Activated CD4-positive, alpha-beta memory T cell treated with anti-CD3 and anti-CD28 coated beads for 36 hours (primary cell): ENCODE measurements at regions of chr19 and their contacts with region 1.

Region 1: DNA sequence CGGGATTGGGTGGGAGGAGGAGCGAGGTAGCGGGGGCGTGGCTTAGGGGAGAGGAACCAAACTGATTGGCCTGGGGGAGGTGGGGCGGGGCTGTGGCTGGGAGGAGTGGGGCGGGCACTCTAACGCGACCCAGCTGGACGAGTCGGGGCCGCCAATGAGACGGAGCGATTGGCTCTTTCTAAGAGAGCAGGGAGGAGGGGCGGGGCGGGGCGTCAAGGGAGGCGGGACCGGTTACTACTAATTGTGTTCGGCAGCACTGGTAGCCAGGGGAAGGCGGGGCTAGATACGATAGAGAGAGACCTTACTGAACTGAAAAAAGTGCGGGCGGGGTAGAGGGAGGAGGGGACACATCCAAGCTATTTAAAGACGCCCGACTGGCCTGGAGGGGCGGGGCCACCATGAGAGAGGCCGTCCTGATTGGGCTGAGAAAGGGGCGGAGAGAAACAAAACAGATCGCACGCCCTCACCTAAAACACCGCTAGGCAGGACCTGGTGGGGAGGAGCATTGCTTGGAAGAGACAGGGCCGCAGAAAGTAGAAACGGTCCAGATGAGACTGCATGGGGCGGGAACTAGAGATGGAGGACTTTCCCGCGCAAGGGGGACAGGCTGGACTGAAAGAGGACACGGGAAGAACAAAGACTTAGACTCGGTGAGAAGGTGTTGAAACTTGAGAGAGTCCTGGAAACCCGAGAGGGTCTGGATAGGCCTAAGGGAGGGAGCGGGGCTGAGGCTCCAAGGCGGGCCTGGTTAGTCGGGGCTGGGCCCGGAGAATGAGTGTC is at the start of gene KCNC3:
- DNase-seq: peak; percentile 100
- H3K4me3 Mint-ChIP-seq: peak within 1 kb of the TSS; percentile 82
- H3K27ac Mint-ChIP-seq: peak within 1 kb of the TSS; percentile 88
- H3K4me1 Mint-ChIP-seq: peaks cover 67% of the 10 kb centered on the region
- H3K27me3 Mint-ChIP-seq: peaks cover 49% of the 10 kb centered on the region
- total RNA-seq, gene KCNC3: 5.4 to 6.2 TPM

Region 2: DNA sequence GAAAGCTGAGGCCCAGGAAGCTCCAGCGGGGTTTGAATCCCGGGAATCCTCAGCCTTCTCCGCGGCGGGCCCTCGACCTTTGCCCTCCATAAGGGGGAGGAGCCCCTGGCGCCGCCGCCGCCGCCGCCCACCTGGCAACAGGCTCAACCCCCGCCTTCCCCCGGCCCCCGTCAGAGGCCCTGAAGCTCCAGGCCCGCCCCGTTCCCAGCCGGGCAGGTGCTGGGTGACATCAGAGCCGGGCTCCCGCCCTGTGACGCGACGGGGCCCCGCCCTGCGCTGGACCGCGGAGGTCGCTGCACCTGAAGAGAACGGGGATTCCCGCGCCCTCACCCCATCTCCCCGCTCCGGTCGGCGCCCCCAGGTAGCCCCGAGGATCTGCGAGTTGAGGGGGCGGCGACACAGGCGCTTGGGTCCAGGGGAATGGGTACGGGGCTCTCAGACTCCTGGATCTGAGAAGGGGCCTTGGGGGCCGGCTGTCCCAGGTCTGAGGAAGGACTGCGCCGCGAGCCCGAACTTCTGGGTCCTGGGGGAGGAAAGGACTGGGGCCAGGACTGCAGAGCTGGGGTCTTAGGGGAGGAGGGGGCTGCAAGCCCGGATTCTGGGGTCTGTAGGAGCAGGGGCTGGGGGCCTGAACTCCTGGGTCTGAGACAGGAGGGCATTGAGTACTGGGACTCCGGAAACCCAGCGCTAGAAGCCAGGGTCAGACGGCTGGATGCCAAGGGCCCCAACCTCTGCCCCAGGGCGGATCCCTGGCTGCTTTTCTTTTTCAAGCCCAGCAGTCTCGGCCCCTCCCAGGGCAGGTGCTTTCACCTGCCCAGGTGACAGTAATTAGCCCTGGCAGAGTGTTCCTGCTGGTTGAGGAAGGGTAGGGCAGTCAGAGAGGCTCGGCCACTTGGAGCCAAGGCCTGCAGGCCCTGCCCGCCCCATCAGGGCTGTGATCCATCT is 123.9 kb before region 1 on chr19:
- CTCF ChIA-PET with region 1: no interaction called
- POLR2A ChIA-PET with region 1: no interaction called
- intact Hi-C with region 1: no loop called
- DNase-seq: no peak
- H3K4me3 Mint-ChIP-seq: no peak overlapping the region
- H3K27ac Mint-ChIP-seq: no peak overlapping the region
- H3K4me1 Mint-ChIP-seq: peaks cover 2% of the 10 kb centered on the region
- H3K27me3 Mint-ChIP-seq: peaks cover 37% of the 10 kb centered on the region

Region 3: DNA sequence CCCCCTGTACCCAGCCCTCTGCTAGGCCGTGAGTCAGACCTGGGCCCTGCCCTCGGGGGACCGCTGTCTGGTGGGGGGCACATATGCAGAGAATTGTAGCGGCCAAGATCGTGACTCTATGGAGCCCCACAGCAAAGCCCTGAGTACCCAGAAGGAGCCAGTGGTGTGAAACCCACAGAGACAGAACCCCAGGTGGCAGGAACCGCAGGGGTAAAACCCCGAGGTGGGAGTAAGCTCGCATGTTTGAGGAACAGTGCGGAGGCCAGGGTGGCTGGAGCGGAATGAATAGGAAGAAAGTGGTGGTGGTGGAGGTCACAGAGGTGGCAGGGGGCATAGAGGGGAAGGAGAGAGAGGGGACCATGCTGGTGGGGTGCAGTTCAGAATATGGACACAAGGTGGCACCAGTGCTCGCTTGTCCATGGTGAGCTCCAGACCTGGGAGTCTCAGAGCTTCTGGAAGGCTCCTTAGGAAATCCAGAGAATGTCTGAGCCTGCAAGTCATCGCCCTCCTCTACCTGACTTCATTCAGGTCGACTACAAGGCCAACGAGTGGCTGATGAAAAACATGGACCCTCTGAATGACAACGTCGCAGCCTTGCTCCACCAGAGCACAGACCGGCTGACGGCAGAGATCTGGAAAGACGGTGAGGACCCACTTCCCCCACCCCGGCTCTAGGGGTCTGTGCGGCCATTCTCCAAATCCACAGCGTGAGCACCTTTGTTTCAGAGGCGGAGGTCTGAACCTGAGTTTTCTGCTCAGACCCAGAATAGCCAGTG is 77.0 kb before region 1 on chr19:
- CTCF ChIA-PET with region 1: interaction called, 6 read pairs
- POLR2A ChIA-PET with region 1: no interaction called
- intact Hi-C with region 1: loop called (anchors 5 kb)
- DNase-seq: peak; percentile 57
- H3K4me3 Mint-ChIP-seq: no peak overlapping the region
- H3K27ac Mint-ChIP-seq: no peak overlapping the region
- H3K4me1 Mint-ChIP-seq: no peaks in the 10 kb centered on the region
- H3K27me3 Mint-ChIP-seq: peaks cover 19% of the 10 kb centered on the region

Region 4: DNA sequence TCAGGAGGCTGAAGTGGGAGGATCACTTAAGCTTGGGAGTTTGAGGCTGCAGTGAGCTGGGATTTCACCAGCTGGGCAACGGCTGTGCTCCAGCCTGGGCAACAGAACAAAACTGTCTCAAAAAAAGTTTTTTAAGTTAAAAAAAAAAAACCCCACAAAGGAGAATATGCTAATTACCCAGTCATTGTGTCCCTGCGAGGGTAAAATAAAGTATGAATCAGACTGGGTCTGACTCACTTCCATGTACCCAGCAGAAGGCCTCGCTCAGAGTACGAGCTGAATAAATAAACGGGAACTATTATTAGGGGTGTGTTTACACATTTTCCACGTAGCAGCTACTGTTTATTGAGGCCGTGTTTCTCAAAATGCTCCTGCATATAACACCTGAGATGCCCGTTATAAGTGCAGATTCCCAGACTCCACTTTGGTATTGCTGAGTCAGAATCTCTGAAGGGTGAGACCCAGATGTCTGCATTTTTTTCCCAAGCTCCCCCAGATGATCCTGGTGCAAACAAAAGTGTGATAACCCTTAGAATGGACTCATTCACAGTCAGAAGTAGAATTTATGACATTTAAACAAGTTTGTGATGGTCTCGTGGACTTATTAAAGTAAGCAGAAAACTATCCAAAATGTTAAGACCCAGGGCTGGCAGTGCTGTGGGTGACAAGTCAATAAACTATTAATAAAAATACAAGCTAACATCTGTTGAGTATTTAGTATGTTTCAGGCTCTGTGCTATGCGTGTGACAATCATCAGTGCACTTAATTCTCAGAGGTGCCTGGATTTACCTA is 28.3 kb before region 1 on chr19:
- CTCF ChIA-PET with region 1: interaction called, 11 read pairs
- POLR2A ChIA-PET with region 1: interaction called, 3 read pairs
- intact Hi-C with region 1: loop called (anchors 1 kb)
- DNase-seq: peak; percentile 39
- H3K4me3 Mint-ChIP-seq: no peak overlapping the region
- H3K27ac Mint-ChIP-seq: peak overlapping the region; percentile 69
- H3K4me1 Mint-ChIP-seq: peaks cover 16% of the 10 kb centered on the region
- H3K27me3 Mint-ChIP-seq: peaks cover 20% of the 10 kb centered on the region

Region 5: GRCh38 chr19:50311723-50312635 is 17.4 kb before region 1 on chr19:
- CTCF ChIA-PET with region 1: no interaction called
- POLR2A ChIA-PET with region 1: no interaction called
- intact Hi-C with region 1: no loop called
- DNase-seq: peak; percentile 14
- H3K4me3 Mint-ChIP-seq: no peak overlapping the region
- H3K27ac Mint-ChIP-seq: no peak overlapping the region
- H3K4me1 Mint-ChIP-seq: peaks cover 17% of the 10 kb centered on the region
- H3K27me3 Mint-ChIP-seq: peaks cover 60% of the 10 kb centered on the region

Region 6: GRCh38 chr19:50376166-50377050 is 47.1 kb after region 1 on chr19 and contains the start of gene NR1H2:
- CTCF ChIA-PET with region 1: interaction called, 3 read pairs
- POLR2A ChIA-PET with region 1: no interaction called
- intact Hi-C with region 1: loop called (anchors 1 kb)
- DNase-seq: peak; percentile 96
- H3K4me3 Mint-ChIP-seq: peak within 1 kb of the TSS; percentile 91
- H3K27ac Mint-ChIP-seq: peak within 1 kb of the TSS; percentile 98
- H3K4me1 Mint-ChIP-seq: peaks cover 21% of the 10 kb centered on the region
- H3K27me3 Mint-ChIP-seq: no peaks in the 10 kb centered on the region
- total RNA-seq, gene NR1H2: 73.9 to 75.6 TPM

Region 7: GRCh38 chr19:50383852-50384684 is 54.7 kb after region 1 on chr19 and contains the start of gene POLD1:
- CTCF ChIA-PET with region 1: no interaction called
- POLR2A ChIA-PET with region 1: interaction called, 5 read pairs
- intact Hi-C with region 1: loop called (anchors 1 kb)
- DNase-seq: peak; percentile 99
- H3K4me3 Mint-ChIP-seq: peak within 1 kb of the TSS; percentile 98
- H3K27ac Mint-ChIP-seq: peak within 1 kb of the TSS; percentile 95
- H3K4me1 Mint-ChIP-seq: peaks cover 33% of the 10 kb centered on the region
- H3K27me3 Mint-ChIP-seq: no peaks in the 10 kb centered on the region
- total RNA-seq, gene POLD1: 190 to 191 TPM

Region 8: GRCh38 chr19:50450369-50451222 is 121.3 kb after region 1 on chr19:
- CTCF ChIA-PET with region 1: no interaction called
- POLR2A ChIA-PET with region 1: no interaction called
- intact Hi-C with region 1: no loop called
- DNase-seq: no peak
- H3K4me3 Mint-ChIP-seq: no peak overlapping the region
- H3K27ac Mint-ChIP-seq: no peak overlapping the region
- H3K4me1 Mint-ChIP-seq: no peaks in the 10 kb centered on the region
- H3K27me3 Mint-ChIP-seq: peaks cover 4% of the 10 kb centered on the region

Region 9: GRCh38 chr19:50804420-50805272 is 475.3 kb after region 1 on chr19:
- CTCF ChIA-PET with region 1: no interaction called
- POLR2A ChIA-PET with region 1: no interaction called
- intact Hi-C with region 1: loop called (anchors 10 kb)
- DNase-seq: peak; percentile 99
- H3K4me3 Mint-ChIP-seq: peak overlapping the region; percentile 96
- H3K27ac Mint-ChIP-seq: peak overlapping the region; percentile 100
- H3K4me1 Mint-ChIP-seq: peaks cover 34% of the 10 kb centered on the region
- H3K27me3 Mint-ChIP-seq: no peaks in the 10 kb centered on the region